Breast epithelium (tissue), 4 donors: ENCODE measurements at regions of chr13 and their contacts with region 1.

Region 1: GRCh38 chr13:36094478-36094877 is 36.7 kb downstream of the DCLK1 start:
- DNase-seq: no peak
- H3K4me3 ChIP-seq: no peak overlapping the region
- H3K27ac ChIP-seq: no peak overlapping the region
- H3K4me1 ChIP-seq: no peaks in the 10 kb centered on the region
- H3K27me3 ChIP-seq: no peaks in the 10 kb centered on the region
- CTCF ChIP-seq: no peak
- POLR2A ChIP-seq: no peak

Region 2: DNA sequence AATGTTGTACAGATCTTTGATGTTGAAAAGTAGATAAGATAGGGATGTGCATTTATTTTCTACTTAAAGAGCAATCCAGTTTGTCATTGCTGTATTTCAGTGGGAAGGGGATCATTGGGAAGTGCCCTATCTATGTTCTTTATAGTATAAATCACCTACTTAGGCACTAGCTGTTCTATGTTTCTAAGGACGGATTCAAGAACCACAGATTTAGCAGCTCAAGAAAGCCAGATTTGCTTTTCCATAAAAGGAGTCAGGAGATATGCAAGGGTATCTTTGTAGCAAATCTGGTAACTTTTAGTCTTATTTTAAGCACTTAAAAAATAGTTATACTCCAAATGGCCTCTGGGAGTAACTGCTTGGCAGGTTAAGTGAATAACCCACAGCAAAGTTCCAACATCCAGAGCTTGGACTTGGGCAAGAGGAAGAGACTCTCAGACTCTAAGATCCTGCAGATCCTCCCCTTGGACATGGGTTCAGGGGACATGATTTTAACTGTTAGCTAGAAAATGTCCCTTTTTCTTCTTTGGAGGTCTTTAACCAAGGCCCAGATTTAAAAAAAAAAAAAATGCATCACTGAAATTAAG is 13.1 kb after region 1 on chr13:
- intact Hi-C with region 1: loop called (anchors 1 kb)
- DNase-seq: no peak
- H3K4me3 ChIP-seq: no peak overlapping the region
- H3K27ac ChIP-seq: no peak overlapping the region
- H3K4me1 ChIP-seq: no peaks in the 10 kb centered on the region
- H3K27me3 ChIP-seq: no peaks in the 10 kb centered on the region
- CTCF ChIP-seq: no peak
- POLR2A ChIP-seq: no peak

Region 3: DNA sequence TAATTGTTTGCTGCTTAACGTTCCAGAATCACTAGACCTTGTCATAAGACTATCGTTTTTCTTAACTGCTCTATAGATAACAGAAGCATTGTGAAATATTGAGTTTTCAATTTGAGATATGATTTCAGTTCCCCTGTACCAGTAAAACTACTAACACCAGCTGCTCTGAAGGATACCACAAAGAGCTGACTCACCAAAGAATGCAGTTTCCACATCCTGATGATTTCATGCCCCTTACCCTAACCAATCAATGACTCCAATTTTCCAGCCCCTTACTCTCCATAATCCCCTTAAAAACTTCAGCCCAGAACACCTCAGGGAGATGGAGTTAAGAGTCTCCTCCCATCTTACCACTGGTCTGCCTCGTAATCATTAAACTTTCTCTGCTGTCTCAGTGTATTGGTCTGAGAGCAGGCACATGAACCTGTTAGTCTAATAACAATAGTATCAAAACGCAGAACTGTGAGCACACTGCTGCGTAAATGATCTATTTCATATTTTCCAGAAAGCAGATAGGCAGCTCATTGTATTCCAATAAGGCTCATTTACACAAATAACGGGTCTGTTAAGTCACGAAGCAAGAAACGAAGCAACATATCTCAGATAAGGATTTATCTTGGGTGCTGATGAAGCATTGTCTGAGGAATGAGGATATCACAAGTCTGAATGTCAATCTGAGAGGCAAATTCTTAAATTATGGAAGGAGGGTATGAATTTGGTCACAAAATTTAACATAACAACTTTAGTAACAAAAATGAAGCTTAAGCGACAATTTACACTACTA is 323.7 kb after region 1 on chr13:
- intact Hi-C with region 1: no loop called
- DNase-seq: no peak
- H3K4me3 ChIP-seq: no peak overlapping the region
- H3K27ac ChIP-seq: no peak overlapping the region
- H3K4me1 ChIP-seq: no peaks in the 10 kb centered on the region
- H3K27me3 ChIP-seq: no peaks in the 10 kb centered on the region
- CTCF ChIP-seq: no peak
- POLR2A ChIP-seq: no peak

Region 4: GRCh38 chr13:36559375-36559774 is 464.9 kb after region 1 on chr13:
- intact Hi-C with region 1: no loop called
- DNase-seq: no peak
- H3K4me3 ChIP-seq: no peak overlapping the region
- H3K27ac ChIP-seq: no peak overlapping the region
- H3K4me1 ChIP-seq: no peaks in the 10 kb centered on the region
- H3K27me3 ChIP-seq: no peaks in the 10 kb centered on the region
- CTCF ChIP-seq: no peak
- POLR2A ChIP-seq: no peak